ENCODE measurements at regions of chr2 and their contacts with region 1.

Region 1: GRCh38 chr2:231411831-231412617 is 16.5 kb downstream of the B3GNT7 start:
- DNase-seq: no peak
- ATAC-seq: peak; percentile 100
- H3K4me3 ChIP-seq: peak overlapping the region; percentile 66
- H3K27ac ChIP-seq: no peak overlapping the region
- H3K4me1 ChIP-seq: no peaks in the 10 kb centered on the region
- H3K27me3 ChIP-seq: no peaks in the 10 kb centered on the region
- CTCF ChIP-seq: peak; percentile 72 to 95 (median 94)
- EP300 ChIP-seq: no peak
- POLR2A ChIP-seq: no peak
- RAD21 ChIP-seq: peak; percentile 87

Region 2: GRCh38 chr2:230824406-230824978 is 587.5 kb before region 1 on chr2:
- CTCF ChIA-PET with region 1: interaction called, 4 read pairs
- POLR2A ChIA-PET with region 1: no interaction called
- RAD21 ChIA-PET with region 1: no interaction called
- SMC1A ChIA-PET with region 1: no interaction called
- in situ Hi-C with region 1: no loop called
- intact Hi-C with region 1: loop called (anchors 5 kb)
- DNase-seq: peak; percentile 45
- ATAC-seq: peak; percentile 88
- H3K4me3 ChIP-seq: no peak overlapping the region
- H3K27ac ChIP-seq: no peak overlapping the region
- H3K4me1 ChIP-seq: peaks cover 5% of the 10 kb centered on the region; the same call in 1 of the 2 replicates
- H3K27me3 ChIP-seq: no peaks in the 10 kb centered on the region
- CTCF ChIP-seq: peak; percentile 59 to 77 (median 62)
- EP300 ChIP-seq: no peak
- POLR2A ChIP-seq: no peak
- RAD21 ChIP-seq: peak; percentile 91

Region 3: DNA sequence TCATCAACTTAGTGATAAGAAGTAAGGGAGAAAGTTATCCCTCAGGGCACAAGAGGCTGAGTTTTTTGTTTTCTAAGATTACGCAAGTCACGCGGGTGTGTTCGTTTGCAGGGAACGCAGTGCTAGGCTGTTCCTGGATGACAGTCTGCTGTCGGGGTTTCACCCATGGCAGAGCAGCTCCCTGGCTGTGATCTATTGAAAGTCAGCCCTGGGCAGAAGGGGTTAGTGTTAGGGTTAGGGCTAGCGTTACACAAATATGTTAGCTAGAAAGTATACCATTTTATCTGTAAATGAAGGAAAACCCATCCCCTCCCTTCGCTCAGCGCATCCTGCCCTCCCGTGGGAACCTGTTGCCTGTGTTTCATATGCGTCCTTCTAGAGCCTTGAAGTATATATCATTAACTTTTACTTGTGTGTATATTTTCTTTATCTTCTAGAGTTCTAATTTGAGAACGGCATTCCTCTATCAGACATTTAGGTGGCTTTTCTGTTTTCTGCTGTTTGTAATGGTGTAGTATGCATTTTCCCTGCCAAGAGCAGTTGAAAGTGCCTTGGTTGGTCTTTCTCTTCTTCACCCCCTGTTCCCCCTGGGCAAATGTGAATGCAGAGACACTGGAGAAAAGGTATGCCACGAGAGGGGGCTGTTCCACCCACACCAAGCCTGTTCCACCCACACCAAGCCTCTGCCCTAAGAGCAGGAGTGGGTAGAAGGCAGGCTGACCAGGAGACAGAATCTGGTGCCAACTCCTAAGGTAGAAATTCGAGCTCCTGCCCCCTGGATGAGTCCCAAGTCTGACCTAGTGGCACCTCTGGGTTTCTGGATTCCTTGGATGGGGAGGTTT is 166.6 kb before region 1 on chr2:
- CTCF ChIA-PET with region 1: interaction called, 19 read pairs
- POLR2A ChIA-PET with region 1: no interaction called
- RAD21 ChIA-PET with region 1: interaction called, 3 read pairs
- SMC1A ChIA-PET with region 1: interaction called, 18 read pairs
- in situ Hi-C with region 1: no loop called
- intact Hi-C with region 1: no loop called
- DNase-seq: no peak
- ATAC-seq: peak; percentile 85
- H3K4me3 ChIP-seq: no peak overlapping the region
- H3K27ac ChIP-seq: no peak overlapping the region
- H3K4me1 ChIP-seq: no peaks in the 10 kb centered on the region
- H3K27me3 ChIP-seq: no peaks in the 10 kb centered on the region
- CTCF ChIP-seq: peak in 2 of 3 experiments; percentile 31 to 48; a peak in 3 of 6 replicates
- EP300 ChIP-seq: no peak
- POLR2A ChIP-seq: no peak
- RAD21 ChIP-seq: peak; percentile 30; the same call in 1 of the 2 replicates

Region 4: DNA sequence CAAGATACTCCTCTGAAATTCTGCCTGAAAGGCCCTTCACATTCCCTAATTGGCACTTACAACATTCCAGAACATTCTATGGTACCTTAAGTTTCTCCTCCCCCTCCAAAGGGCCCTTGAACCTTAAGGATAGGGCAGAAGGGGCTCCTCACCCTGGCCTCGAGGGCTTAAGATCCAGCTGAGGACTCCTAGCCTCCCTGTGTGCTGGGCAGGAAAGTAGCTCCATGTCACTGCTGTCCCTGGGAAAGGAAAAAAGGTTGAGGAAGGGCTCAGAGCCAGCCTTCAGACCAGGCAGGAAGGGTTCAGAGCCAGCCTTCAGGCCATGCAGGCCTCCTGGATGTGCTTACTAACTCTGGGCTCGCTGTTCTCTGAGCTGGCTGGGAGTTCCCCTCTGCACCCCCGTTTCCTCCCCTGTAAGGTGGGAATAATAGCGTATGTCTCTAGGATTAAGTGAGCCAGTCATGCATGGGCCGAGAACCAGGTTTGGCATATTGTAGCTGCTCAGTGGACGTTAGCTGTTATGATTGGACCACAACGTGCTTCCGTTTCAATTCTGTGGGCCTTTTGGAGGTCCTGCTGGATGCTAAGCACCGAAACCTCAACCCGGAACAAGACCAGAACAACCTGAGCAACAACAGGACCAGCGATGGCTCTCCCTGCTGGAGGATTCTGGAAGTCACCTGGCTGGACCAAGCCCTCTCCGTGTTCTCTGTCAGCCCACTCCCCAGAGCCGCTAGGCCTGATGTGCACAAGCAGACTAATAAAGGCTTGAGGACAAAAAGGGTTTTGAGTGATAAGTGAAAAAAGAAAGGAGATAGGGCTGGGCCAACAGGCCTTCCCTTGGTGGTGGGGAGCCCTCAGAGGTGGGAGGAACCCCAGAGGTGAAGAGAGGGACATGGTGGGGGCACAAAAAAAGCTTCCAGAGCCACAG is 17.5 kb before region 1 on chr2:
- CTCF ChIA-PET with region 1: interaction called, 59 read pairs
- POLR2A ChIA-PET with region 1: interaction called, 7 read pairs
- RAD21 ChIA-PET with region 1: interaction called, 28 read pairs
- SMC1A ChIA-PET with region 1: interaction called, 26 read pairs
- in situ Hi-C with region 1: no loop called
- intact Hi-C with region 1: no loop called
- DNase-seq: peak; percentile 87
- ATAC-seq: peak; percentile 66
- H3K4me3 ChIP-seq: peak overlapping the region; percentile 65
- H3K27ac ChIP-seq: peak overlapping the region; percentile 95
- H3K4me1 ChIP-seq: peaks cover 58% of the 10 kb centered on the region
- H3K27me3 ChIP-seq: no peaks in the 10 kb centered on the region
- CTCF ChIP-seq: peak; percentile 52 to 67 (median 61)
- EP300 ChIP-seq: peak in 1 of 2 experiments; percentile 53; a peak in 1 of 4 replicates
- POLR2A ChIP-seq: peak; percentile 76
- RAD21 ChIP-seq: peak; percentile 47

Region 5: GRCh38 chr2:231452799-231453508 is 40.9 kb after region 1 on chr2:
- CTCF ChIA-PET with region 1: interaction called, 52 read pairs
- POLR2A ChIA-PET with region 1: interaction called, 3 read pairs
- RAD21 ChIA-PET with region 1: interaction called, 5 read pairs
- SMC1A ChIA-PET with region 1: interaction called, 3 read pairs
- in situ Hi-C with region 1: no loop called
- intact Hi-C with region 1: no loop called
- DNase-seq: no peak
- ATAC-seq: peak; percentile 13
- H3K4me3 ChIP-seq: no peak overlapping the region
- H3K27ac ChIP-seq: no peak overlapping the region
- H3K4me1 ChIP-seq: no peaks in the 10 kb centered on the region
- H3K27me3 ChIP-seq: no peaks in the 10 kb centered on the region
- CTCF ChIP-seq: no peak
- EP300 ChIP-seq: no peak
- POLR2A ChIP-seq: peak; percentile 65
- RAD21 ChIP-seq: no peak

Region 6: GRCh38 chr2:231810905-231811304 is 398.9 kb after region 1 on chr2:
- CTCF ChIA-PET with region 1: no interaction called
- POLR2A ChIA-PET with region 1: no interaction called
- RAD21 ChIA-PET with region 1: no interaction called
- SMC1A ChIA-PET with region 1: no interaction called
- in situ Hi-C with region 1: no loop called
- intact Hi-C with region 1: no loop called
- DNase-seq: no peak
- ATAC-seq: no peak
- H3K4me3 ChIP-seq: no peak overlapping the region
- H3K27ac ChIP-seq: no peak overlapping the region
- H3K4me1 ChIP-seq: no peaks in the 10 kb centered on the region
- H3K27me3 ChIP-seq: no peaks in the 10 kb centered on the region
- CTCF ChIP-seq: no peak
- EP300 ChIP-seq: no peak
- POLR2A ChIP-seq: no peak
- RAD21 ChIP-seq: no peak

Region 7: DNA sequence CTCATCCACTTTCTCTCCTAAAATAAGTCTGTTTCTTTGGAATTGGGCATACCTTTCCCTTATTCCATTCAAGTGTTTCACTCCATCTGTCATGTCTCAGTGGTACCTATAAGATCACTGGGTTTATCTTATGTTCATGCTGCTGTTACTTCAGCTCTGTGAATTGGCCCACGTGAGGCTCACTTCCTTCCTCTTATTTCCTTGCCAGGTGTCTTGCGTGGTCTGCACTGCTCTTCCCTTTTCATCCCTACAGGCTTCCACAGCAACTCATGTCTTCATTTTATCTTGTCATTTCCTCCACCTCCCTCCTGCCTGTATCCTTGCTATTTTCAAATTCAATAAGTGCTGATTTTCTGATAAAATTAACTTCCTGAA is 807.5 kb after region 1 on chr2:
- CTCF ChIA-PET with region 1: no interaction called
- POLR2A ChIA-PET with region 1: no interaction called
- RAD21 ChIA-PET with region 1: no interaction called
- SMC1A ChIA-PET with region 1: no interaction called
- in situ Hi-C with region 1: no loop called
- intact Hi-C with region 1: no loop called
- DNase-seq: no peak
- ATAC-seq: no peak
- H3K4me3 ChIP-seq: no peak overlapping the region
- H3K27ac ChIP-seq: no peak overlapping the region; the same call in 1 of the 2 replicates
- H3K4me1 ChIP-seq: peaks cover 5% of the 10 kb centered on the region; the same call in 1 of the 2 replicates
- H3K27me3 ChIP-seq: no peaks in the 10 kb centered on the region
- CTCF ChIP-seq: no peak
- EP300 ChIP-seq: no peak
- POLR2A ChIP-seq: no peak
- RAD21 ChIP-seq: no peak

Measured in GM12878 (cell line).